BJ (cell line): ENCODE measurements at regions of chr11 and their contacts with region 1.

Region 1: DNA sequence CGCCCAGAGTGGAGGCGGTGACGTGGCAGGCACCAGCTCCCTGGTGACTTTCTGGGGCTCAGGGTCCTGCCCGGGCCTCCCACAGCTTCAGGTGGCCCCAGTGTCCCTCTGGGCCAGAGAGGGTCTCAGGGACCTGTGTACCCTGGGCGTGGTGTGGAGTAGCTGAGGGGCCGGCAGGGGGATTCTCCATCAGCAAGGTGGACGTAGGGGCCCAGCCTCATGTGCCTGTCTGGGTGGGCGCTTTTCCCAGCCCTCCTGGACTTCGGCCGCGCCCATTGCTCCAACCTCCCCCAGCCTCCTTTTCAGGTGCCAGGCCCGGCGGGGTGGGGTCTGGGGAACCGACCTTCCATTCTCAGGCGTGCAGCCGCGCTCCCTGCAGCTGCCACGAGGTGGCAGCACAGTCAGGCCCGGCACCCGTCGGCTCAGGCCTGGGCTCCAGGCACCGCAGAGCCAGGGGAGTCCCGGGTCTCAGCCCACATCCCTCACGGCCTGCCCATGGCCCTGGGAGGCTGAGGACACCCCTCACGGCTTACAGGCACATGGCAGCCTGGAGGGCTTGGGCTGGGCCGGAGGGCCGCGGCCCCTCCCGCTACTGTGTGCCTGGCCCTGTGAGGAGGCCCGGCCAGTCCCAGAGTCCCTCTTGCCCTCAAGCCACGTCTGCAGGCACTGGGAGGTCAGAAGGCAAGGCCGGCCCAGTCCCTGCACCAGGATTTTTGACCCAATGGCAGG is 19.9 kb upstream of the MUC5B start:
- DNase-seq: no peak
- H3K4me3 ChIP-seq: no peak overlapping the region
- H3K27me3 ChIP-seq: no peaks in the 10 kb centered on the region
- CTCF ChIP-seq: peak; percentile 95

Region 2: GRCh38 chr11:1515082-1516060 is 312.4 kb after region 1 on chr11:
- CTCF ChIA-PET with region 1: interaction called, 36 read pairs
- POLR2A ChIA-PET with region 1: no interaction called
- DNase-seq: no peak
- H3K4me3 ChIP-seq: no peak overlapping the region
- H3K27me3 ChIP-seq: no peaks in the 10 kb centered on the region
- CTCF ChIP-seq: peak; percentile 94

Region 3: GRCh38 chr11:1652771-1653540 is 450.0 kb after region 1 on chr11:
- CTCF ChIA-PET with region 1: no interaction called
- POLR2A ChIA-PET with region 1: no interaction called
- DNase-seq: no peak
- H3K4me3 ChIP-seq: no peak overlapping the region
- H3K27me3 ChIP-seq: peaks cover 6% of the 10 kb centered on the region
- CTCF ChIP-seq: peak; percentile 96